ENCODE measurements at regions of chr5 and their contacts with region 1.

Region 1: DNA sequence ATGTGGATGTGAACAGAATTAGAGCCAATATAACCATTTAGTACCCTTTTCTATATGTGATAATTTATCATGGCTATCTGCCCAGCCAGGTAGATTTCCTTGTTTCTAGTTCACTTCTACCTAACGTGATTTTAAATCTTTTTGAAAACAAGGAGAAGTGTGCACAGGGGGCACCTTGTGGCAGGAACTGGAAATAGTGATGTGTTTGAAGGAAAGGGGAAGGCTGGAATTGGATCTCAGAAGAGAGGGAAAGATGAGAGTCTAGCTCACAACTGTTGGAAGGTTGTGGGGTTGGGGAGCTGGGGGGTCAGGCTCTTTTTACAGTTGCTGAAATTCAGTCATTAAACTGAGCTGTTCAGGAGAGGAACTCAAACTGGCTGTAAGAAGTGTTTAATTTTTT is 219.5 kb downstream of the KCTD16 start:
- DNase-seq: peak; percentile 37 to 39
- H3K4me3 ChIP-seq: no peak overlapping the region
- H3K4me3 Mint-ChIP-seq: no peak overlapping the region
- H3K27ac Mint-ChIP-seq: no peak overlapping the region
- H3K4me1 ChIP-seq: no peaks in the 10 kb centered on the region
- H3K4me1 Mint-ChIP-seq: no peaks in the 10 kb centered on the region
- H3K27me3 ChIP-seq: no peaks in the 10 kb centered on the region
- H3K27me3 Mint-ChIP-seq: no peaks in the 10 kb centered on the region
- CTCF ChIP-seq: peak; percentile 57 to 61

Region 2: DNA sequence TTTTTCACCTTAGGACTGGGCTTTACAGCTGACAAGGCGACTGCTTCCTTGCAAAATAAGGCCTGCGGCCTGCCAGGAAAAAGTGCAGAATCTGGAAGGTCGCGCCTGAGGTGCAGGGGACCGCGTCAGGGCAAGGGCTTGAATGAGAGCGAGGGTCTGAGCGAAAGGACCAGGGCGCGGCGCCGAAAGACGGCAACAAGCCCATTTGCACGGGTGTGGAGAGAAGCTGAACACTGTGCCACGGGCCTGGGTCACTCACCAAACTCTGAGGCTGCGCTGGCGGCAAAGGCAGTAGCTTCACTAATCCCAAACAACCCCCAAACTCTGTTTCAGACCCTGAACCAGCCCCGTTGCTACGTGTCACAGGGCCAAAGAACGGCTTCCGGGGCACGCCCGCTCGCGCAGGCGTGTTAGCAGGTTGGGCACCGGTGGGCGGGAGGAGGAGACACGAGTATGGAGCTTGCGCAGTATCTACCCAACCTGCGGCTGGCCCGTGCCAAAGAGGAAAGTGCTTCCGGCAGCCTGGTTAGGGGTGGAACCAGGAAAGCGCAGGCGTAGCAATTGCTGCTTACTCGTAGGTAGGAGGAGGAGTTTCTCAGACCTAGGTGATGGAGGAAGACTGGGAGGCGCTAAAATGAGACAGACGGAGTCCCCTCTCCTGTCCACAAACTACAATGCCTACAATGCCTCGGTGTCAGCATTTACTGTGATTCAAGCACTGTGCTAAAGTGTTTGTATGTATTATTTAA is 219.7 kb before region 1 on chr5 and contains the starts of genes KCTD16 and YIPF5:
- CTCF ChIA-PET with region 1: no interaction called
- POLR2A ChIA-PET with region 1: no interaction called
- intact Hi-C with region 1: no loop called
- DNase-seq: peak; percentile 96 to 98
- H3K4me3 ChIP-seq: peak within 1 kb of the TSS; percentile 70
- H3K4me3 Mint-ChIP-seq: peak within 1 kb of the TSS; percentile 96
- H3K27ac Mint-ChIP-seq: peak within 1 kb of the TSS; percentile 96
- H3K4me1 ChIP-seq: no peaks in the 10 kb centered on the region
- H3K4me1 Mint-ChIP-seq: peaks cover 7% of the 10 kb centered on the region
- H3K27me3 ChIP-seq: no peaks in the 10 kb centered on the region
- H3K27me3 Mint-ChIP-seq: peaks cover 2% of the 10 kb centered on the region
- CTCF ChIP-seq: no peak
- total RNA-seq, gene KCTD16: 0.29 and 0.51 TPM in 2 replicates
- total RNA-seq, gene YIPF5: 57.8 and 59.2 TPM in 2 replicates

Region 3: GRCh38 chr5:144248015-144248414 is 142.1 kb before region 1 on chr5:
- CTCF ChIA-PET with region 1: no interaction called
- POLR2A ChIA-PET with region 1: no interaction called
- intact Hi-C with region 1: loop called (anchors 1 kb)
- DNase-seq: no peak
- H3K4me3 ChIP-seq: no peak overlapping the region
- H3K4me3 Mint-ChIP-seq: no peak overlapping the region
- H3K27ac Mint-ChIP-seq: no peak overlapping the region
- H3K4me1 ChIP-seq: no peaks in the 10 kb centered on the region
- H3K4me1 Mint-ChIP-seq: no peaks in the 10 kb centered on the region
- H3K27me3 ChIP-seq: no peaks in the 10 kb centered on the region
- H3K27me3 Mint-ChIP-seq: peaks cover 4% of the 10 kb centered on the region
- CTCF ChIP-seq: no peak

Region 4: GRCh38 chr5:144352330-144352729 is 37.8 kb before region 1 on chr5:
- CTCF ChIA-PET with region 1: no interaction called
- POLR2A ChIA-PET with region 1: no interaction called
- intact Hi-C with region 1: no loop called
- DNase-seq: no peak
- H3K4me3 ChIP-seq: no peak overlapping the region
- H3K4me3 Mint-ChIP-seq: no peak overlapping the region
- H3K27ac Mint-ChIP-seq: no peak overlapping the region
- H3K4me1 ChIP-seq: no peaks in the 10 kb centered on the region
- H3K4me1 Mint-ChIP-seq: peaks cover 7% of the 10 kb centered on the region
- H3K27me3 ChIP-seq: no peaks in the 10 kb centered on the region
- H3K27me3 Mint-ChIP-seq: no peaks in the 10 kb centered on the region
- CTCF ChIP-seq: no peak